ENCODE measurements at regions of chr1 and their contacts with region 1.

Region 1: GRCh38 chr1:152148981-152149380 is 10.0 kb downstream of the RPTN start:
- DNase-seq: no peak
- H3K4me3 ChIP-seq: no peak overlapping the region
- H3K27ac ChIP-seq: no peak overlapping the region
- H3K4me1 ChIP-seq: no peaks in the 10 kb centered on the region
- H3K27me3 ChIP-seq: peaks cover 0 to 4% (median 0%) of the 10 kb centered on the region in 5 experiments

Region 2: DNA sequence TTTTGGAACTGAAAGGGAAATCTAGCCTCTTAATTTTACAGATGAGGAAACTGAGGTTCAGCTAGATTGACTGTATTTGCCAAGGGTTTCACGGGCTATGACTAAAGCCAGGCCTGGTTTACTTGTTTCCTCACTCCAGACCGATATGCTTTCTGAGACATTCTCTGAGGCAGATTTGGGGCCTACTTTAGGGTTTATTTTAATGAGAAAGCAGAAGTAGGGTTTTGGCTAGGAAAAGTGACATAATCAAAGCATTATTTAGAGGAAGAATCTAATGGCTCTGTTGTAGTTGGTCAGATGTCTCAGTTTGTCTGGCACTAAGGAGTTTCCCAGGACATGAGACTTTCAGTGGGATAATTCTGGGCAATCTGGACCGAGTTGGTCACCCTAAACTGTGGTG is 11.6 kb after region 1 on chr1:
- CTCF ChIA-PET with region 1: interaction called, 19 read pairs
- POLR2A ChIA-PET with region 1: no interaction called
- DNase-seq: peak in 2 of 3 donors; percentile 72 to 75
- H3K4me3 ChIP-seq: no peak overlapping the region
- H3K27ac ChIP-seq: no peak overlapping the region
- H3K4me1 ChIP-seq: peaks cover 5 to 60% (median 16%) of the 10 kb centered on the region in 4 experiments
- H3K27me3 ChIP-seq: no peaks in the 10 kb centered on the region